Tibial artery (tissue), 4 donors: ENCODE measurements at regions of chr11 and their contacts with region 1.

Region 1: DNA sequence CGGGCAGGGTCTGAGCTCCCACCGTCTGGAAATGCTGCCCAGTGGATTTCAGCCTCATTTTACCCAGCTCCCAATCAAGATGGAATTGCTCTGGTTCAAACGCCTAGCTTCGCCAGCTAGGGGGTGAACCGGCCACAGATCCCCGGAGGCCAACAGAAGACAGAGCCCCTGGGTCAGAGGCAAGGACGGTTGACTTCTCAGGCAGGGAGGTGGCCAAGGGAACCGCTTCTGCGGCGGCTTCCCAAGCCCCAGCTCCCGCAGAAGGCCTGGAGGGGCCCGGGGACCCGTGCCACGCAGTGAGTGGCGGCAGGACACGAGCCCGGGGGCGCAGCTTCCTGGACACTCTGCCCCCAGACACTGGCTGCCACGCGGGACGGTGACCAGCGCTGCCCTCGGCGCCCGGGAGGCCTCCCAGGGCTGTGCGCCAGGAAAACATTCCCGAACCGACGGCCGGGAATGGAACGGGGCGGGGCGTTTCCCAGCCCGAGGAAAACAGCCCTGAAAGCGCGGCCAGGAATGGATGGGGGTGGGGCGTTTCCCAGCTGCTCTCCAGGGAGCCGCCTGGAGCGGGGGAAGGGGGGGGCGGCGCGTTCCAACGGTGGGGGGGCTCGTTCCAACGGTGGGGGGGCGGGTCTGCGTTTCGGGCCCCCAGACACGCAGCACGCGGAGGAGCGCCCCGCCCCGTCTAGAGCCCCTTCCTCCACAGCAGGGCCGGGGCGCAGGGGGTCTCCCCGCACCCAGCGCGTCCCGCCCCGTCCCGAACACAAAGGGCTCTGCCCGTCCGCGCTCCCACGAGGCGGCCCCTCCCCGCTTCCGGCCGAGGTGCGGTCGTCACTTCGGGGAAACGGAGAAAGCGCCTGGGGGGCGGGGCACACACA is 13.5 kb upstream of the B4GALNT4 start:
- DNase-seq: peak; percentile 92 to 97
- H3K4me3 ChIP-seq: peak overlapping the region; percentile 50 to 56
- H3K27ac ChIP-seq: peak overlapping the region; percentile 94 to 97
- H3K4me1 ChIP-seq: peaks cover 0 to 33% (median 26%) of the 10 kb centered on the region in 4 donors
- H3K27me3 ChIP-seq: peaks cover 0 to 18% of the 10 kb centered on the region in 2 donors
- CTCF ChIP-seq: no peak

Region 2: GRCh38 chr11:325796-326591 is 29.8 kb before region 1 on chr11:
- intact Hi-C with region 1: loop called (anchors 2 kb)
- DNase-seq: peak in 1 of 2 donors; percentile 61
- H3K4me3 ChIP-seq: no peak overlapping the region
- H3K27ac ChIP-seq: peak overlapping the region; percentile 65 to 68
- H3K4me1 ChIP-seq: peaks cover 8 to 38% (median 24%) of the 10 kb centered on the region in 4 donors
- H3K27me3 ChIP-seq: no peaks in the 10 kb centered on the region
- CTCF ChIP-seq: no peak

Region 3: DNA sequence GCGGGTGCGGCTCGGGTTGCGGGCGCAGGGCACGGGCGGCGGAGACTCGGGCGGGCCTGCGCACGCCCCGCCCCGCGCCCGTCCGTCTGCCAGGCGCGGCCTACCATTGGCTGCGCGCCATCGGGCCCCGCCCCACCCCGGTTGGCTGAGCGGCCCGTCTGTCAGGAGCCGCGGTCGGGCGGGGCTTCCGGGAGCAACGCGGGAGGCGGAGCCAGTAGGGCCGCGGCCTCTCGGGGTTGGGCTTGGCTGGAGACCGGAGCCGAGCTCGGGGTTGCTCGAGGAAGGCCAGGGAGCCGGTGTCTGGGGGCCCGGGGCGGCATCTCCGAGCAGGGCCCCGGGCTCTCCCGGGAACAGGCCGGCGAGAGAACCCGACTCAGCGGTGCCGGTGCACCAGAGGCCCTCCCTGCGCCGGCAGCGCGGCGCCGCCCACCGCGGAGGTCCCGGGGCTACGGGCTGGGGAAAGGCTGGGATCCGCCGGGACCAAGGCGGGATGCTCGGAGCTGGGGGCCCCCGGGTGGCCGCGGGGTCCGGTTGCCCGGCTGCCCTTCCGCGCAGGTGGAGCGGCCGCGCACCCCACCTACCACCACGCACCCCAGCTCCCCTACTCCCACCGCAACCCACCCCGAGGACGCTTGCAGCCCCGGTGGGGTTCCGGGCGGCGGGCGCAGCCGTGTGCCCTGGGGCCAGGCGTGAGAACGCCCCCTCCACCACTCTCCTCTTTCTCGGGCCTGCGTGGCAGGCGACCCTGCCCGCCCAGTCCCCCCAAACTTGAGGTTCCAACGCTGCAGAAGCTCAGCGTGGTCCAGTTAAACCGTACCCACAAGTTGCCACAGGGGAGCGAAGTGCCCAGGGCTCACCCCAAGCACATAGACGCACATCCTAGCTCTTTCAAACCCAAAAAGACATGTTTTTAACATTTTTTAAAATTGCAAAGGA is 180.0 kb after region 1 on chr11 and contains the start of gene HRAS:
- intact Hi-C with region 1: no loop called
- DNase-seq: peak; percentile 91 to 97
- H3K4me3 ChIP-seq: peak within 1 kb of the TSS; percentile 81 to 98
- H3K27ac ChIP-seq: peak within 1 kb of the TSS; percentile 76 to 78
- H3K4me1 ChIP-seq: peaks cover 3 to 44% (median 34%) of the 10 kb centered on the region in 4 donors
- H3K27me3 ChIP-seq: peaks cover 0 to 11% of the 10 kb centered on the region in 2 donors
- CTCF ChIP-seq: no peak